ENCODE measurements at regions of chr6 and their contacts with region 1.

Region 1: DNA sequence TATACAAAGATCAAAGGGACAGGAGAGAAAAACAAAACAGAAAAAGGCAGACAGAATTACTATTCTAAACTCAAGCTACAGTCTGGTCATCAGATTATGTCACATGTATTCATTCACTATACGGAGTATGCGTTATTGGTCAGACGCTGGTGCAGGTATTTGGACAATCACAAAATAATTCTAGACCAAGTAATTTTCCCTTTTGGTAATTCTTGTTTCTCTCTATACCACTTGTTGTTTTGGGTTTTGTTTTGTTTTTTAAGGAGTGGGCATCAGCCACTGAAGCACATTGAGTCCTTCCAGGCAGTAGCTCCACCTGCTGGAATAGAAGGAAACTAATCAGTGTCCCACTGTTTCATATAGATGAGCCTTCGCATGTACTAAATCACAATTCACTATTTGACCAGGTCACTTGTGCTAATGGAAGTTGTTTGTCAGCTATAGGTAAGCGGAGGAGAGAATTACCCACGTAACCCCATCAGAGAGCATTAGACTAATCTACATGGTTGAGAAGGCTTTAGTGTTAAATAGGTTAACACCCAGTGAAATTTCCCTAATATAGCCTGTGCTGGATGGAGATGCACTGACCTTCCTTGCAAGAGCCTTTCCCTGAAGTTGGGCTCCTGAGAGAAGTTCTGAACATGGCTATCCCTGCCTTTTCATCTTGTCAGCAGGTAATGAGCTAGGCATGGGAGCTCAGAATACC is 77.9 kb downstream of the TNFAIP3 start:
- DNase-seq: peak; percentile 46
- H3K4me3 Mint-ChIP-seq: no peak overlapping the region
- H3K27ac Mint-ChIP-seq: peak overlapping the region; percentile 0
- H3K4me1 Mint-ChIP-seq: peaks cover 56% of the 10 kb centered on the region
- H3K27me3 Mint-ChIP-seq: no peaks in the 10 kb centered on the region

Region 2: DNA sequence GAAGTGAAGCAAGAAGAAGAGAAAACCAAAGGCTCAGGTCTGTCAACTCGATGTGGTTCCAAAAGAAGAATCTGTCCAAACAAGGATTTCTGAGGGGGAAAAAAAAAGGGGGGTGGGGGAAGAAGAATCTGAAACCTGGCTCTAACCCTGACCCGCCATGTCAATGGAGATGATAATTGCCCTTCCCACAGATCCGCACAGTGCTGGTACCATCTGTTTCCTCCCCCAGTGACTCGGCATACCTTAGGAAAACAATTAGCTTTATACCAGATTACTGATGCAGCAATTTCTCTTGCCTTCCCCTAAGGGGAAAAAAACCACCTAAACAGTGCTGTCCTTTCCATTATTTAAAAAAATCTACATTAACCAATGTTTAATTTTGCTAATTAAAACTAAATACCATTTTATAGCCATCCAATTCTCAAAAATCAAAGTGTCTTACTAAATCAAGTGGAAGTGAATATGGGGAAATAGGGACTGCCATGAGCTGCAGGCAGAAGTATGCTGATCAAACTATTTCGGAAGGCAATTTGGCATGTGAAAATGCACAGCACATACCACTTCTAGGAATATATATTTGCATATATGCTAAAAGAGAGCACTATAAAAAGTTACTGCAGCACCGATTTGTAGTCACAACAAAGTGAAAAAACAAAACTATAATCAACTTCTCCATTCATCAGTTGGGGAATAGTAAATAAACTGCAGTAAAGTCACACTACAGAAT is 1441.5 kb before region 1 on chr6:
- CTCF ChIA-PET with region 1: no interaction called
- intact Hi-C with region 1: no loop called
- DNase-seq: no peak
- H3K4me3 Mint-ChIP-seq: no peak overlapping the region
- H3K27ac Mint-ChIP-seq: no peak overlapping the region
- H3K4me1 Mint-ChIP-seq: no peaks in the 10 kb centered on the region
- H3K27me3 Mint-ChIP-seq: no peaks in the 10 kb centered on the region

Region 3: DNA sequence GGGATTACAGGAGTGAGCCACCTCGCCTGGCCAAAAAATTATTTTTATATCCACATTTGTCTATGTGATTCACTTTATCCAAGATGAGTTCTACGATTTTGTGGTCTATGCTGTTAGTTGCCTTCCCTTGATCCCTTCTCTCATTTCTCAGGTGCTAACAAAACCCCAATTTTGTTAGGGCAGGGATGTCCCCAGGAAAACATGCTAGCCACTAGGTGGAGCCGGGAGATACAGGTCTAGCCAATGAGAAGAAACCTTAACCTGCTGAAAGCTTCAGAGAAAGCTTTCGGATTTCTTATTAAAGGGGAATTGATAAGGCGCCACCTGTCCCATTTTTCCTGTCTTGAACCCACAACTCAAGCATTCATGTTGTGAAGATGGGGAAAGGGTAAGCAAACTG is 283.3 kb before region 1 on chr6:
- CTCF ChIA-PET with region 1: no interaction called
- intact Hi-C with region 1: loop called (anchors 5 kb)
- DNase-seq: peak; percentile 71
- H3K4me3 Mint-ChIP-seq: no peak overlapping the region
- H3K27ac Mint-ChIP-seq: no peak overlapping the region
- H3K4me1 Mint-ChIP-seq: peaks cover 19% of the 10 kb centered on the region
- H3K27me3 Mint-ChIP-seq: peaks cover 4% of the 10 kb centered on the region

Region 4: GRCh38 chr6:137799950-137800568 is 144.9 kb before region 1 on chr6:
- CTCF ChIA-PET with region 1: interaction called, 21 read pairs
- intact Hi-C with region 1: loop called (anchors 1 kb)
- DNase-seq: peak; percentile 86
- H3K4me3 Mint-ChIP-seq: no peak overlapping the region
- H3K27ac Mint-ChIP-seq: peak overlapping the region; percentile 73
- H3K4me1 Mint-ChIP-seq: peaks cover 60% of the 10 kb centered on the region
- H3K27me3 Mint-ChIP-seq: no peaks in the 10 kb centered on the region

Region 5: GRCh38 chr6:137878486-137879285 is 66.3 kb before region 1 on chr6:
- CTCF ChIA-PET with region 1: interaction called, 161 read pairs
- intact Hi-C with region 1: loop called (anchors 1 kb)
- DNase-seq: no peak
- H3K4me3 Mint-ChIP-seq: peak overlapping the region; percentile 65
- H3K27ac Mint-ChIP-seq: peak overlapping the region; percentile 99
- H3K4me1 Mint-ChIP-seq: peaks cover 82% of the 10 kb centered on the region
- H3K27me3 Mint-ChIP-seq: no peaks in the 10 kb centered on the region

Region 6: DNA sequence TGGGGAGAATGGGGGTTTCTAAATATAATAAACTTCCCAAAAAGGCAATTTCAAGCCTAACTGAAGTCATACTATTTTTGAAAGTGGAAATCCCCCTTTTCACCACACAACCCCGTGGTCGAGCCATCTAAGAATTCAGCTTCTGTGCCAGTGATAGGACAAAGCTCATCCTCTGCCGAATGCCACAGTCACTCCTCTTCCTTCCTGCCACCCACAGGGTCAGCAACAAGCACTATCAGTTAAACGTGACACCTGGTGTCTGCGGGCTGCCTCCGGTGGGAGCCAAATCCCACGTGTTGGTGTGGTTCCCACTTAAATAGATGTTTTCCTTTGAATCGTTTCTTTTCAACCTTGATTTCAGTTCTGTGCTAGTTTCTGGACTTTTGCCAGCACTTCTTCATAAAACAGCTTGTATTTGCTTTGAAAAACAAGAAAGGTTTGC is 17.1 kb before region 1 on chr6:
- CTCF ChIA-PET with region 1: interaction called, 27 read pairs
- intact Hi-C with region 1: loop called (anchors 1 kb)
- DNase-seq: peak; percentile 90
- H3K4me3 Mint-ChIP-seq: peak overlapping the region; percentile 66
- H3K27ac Mint-ChIP-seq: peak overlapping the region; percentile 95
- H3K4me1 Mint-ChIP-seq: peaks cover 63% of the 10 kb centered on the region
- H3K27me3 Mint-ChIP-seq: no peaks in the 10 kb centered on the region

Region 7: DNA sequence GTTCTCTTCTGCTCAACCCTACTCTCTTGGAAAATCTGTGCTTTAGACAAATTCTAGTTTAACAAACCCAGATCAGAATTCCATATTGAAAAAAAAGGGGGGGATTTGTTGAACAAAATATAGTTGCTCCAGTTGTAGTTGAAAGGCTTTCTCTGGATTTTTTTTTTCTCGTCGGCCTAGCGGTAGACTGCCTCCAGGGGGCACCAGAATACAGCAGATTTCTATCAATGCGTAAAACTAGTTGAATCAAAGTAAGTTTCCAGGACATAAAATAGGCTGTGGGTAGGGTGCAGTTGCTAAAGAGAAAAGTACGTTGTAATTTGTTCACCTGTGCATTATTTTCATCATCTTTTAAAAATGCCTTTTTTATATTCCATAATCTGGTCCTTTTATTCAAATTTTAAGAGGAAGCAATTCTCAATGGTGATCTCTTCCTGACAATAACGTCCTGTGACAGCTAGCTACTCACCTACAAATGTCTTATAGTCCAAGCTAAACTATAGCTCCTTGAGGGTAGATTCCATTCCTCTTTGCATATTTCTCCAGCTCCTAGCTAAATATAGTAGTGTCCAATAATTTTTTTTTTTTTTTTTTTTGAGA is 56.9 kb after region 1 on chr6:
- CTCF ChIA-PET with region 1: interaction called, 5 read pairs
- intact Hi-C with region 1: loop called (anchors 2 kb)
- DNase-seq: peak; percentile 84
- H3K4me3 Mint-ChIP-seq: no peak overlapping the region
- H3K27ac Mint-ChIP-seq: no peak overlapping the region
- H3K4me1 Mint-ChIP-seq: peaks cover 16% of the 10 kb centered on the region
- H3K27me3 Mint-ChIP-seq: peaks cover 3% of the 10 kb centered on the region

Region 8: DNA sequence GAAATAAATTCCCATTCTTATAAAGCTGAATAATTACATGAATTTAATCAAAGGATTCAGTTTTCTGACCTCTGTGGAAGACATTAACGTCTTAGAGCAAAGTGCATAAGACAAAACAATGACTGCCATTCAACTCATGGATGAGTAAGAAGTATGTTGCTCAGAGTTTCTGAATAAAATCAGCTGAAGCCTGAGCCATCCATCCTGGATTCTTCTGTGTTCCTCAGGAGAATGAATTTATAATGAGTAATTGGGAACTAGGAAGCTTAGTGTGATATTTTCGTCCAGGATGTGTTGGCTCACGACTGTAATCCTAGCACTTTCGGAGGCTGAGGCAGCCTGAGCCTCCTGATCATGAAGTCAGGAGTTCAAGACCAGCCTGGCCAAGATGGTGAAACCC is 99.5 kb after region 1 on chr6:
- CTCF ChIA-PET with region 1: no interaction called
- intact Hi-C with region 1: no loop called
- DNase-seq: no peak
- H3K4me3 Mint-ChIP-seq: no peak overlapping the region
- H3K27ac Mint-ChIP-seq: no peak overlapping the region
- H3K4me1 Mint-ChIP-seq: no peaks in the 10 kb centered on the region
- H3K27me3 Mint-ChIP-seq: no peaks in the 10 kb centered on the region

Region 9: GRCh38 chr6:138115877-138116660 is 171.1 kb after region 1 on chr6:
- CTCF ChIA-PET with region 1: no interaction called
- intact Hi-C with region 1: no loop called
- DNase-seq: peak; percentile 60
- H3K4me3 Mint-ChIP-seq: no peak overlapping the region
- H3K27ac Mint-ChIP-seq: no peak overlapping the region
- H3K4me1 Mint-ChIP-seq: peaks cover 6% of the 10 kb centered on the region
- H3K27me3 Mint-ChIP-seq: peaks cover 12% of the 10 kb centered on the region

Measured in activated naive CD4-positive, alpha-beta T cell treated with anti-CD3 and anti-CD28 coated beads for 36 hours (primary cell).